ENCODE measurements at regions of chr19 and their contacts with region 1.

Region 1: DNA sequence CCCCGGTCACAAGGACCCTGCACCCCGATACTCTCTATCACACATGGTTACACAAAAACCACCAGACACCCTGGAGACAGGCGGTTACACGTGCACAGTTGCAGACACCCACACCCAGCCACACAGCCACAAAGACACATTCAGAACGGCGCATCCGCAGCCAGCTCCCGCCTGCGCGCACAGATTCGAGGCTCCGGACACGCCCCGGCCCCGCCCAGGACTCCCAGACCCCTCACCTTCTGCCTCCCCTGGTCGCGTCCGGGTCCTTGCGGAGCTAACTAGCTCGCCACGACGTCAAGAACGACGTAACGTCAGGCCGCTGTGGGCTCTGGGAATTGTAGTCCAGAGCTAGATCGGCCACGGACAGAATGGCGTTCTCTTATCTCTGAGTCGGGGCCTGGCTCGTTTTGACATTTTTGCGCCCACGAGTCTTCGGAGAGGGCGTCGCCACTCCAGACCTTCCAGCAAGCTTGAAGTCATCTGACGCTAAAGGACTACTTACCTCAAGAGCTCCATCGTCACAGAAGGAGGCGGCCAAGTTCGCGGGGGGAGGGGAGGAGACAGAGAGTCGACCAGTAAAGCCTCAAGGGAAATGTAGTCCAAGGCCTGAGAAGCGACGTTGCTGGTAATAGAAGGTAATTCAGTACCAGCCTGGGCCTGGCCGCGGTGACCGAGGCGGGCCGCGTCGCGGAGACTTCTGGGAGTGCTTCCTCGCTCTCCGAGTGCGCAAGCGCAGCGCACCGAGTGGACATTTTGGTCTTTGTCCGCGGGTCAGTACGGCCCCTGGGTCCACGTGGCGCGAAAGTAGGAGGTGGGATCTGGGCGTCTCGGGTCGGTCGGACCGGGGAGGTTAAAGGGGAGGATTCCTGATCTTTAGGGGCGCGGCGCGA is at the starts of genes ZNF146 and ZNF565:
- DNase-seq: peak; percentile 95

Region 2: DNA sequence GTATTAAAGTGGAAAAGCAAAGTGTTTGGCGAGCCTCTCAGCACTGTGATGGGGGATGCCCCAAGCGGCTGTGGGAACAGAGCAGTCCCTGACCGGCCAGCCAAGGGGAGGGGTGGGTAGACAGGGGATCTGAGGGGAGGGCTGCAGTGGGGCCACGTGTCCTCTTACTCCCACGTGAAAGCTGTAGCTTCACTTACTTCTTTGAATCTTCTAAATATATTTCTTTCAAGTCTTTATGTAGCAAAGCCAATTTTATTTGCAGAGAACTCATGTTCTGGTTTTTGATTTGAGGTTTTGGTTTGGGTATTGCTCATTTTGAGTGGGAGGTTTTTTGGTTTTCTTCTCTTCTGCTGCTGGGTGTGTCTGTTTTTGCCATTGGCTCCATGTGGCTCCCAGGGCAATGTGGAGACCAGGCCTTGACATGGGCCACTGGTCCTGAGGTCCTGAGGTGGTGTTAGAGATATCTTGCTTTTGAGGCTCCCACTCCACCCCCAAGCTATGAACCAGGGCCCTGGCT is 121.4 kb before region 1 on chr19:
- CTCF ChIA-PET with region 1: no interaction called
- POLR2A ChIA-PET with region 1: no interaction called
- DNase-seq: no peak

Region 3: GRCh38 chr19:36203293-36203692 is 11.3 kb before region 1 on chr19:
- CTCF ChIA-PET with region 1: no interaction called
- POLR2A ChIA-PET with region 1: interaction called, 12 read pairs
- DNase-seq: no peak

Region 4: GRCh38 chr19:36331353-36332228 is 117.0 kb after region 1 on chr19:
- CTCF ChIA-PET with region 1: no interaction called
- POLR2A ChIA-PET with region 1: no interaction called
- DNase-seq: peak; percentile 52